Heart left ventricle (tissue), 16 donors: ENCODE measurements at regions of chr12 and their contacts with region 1.

Region 1: DNA sequence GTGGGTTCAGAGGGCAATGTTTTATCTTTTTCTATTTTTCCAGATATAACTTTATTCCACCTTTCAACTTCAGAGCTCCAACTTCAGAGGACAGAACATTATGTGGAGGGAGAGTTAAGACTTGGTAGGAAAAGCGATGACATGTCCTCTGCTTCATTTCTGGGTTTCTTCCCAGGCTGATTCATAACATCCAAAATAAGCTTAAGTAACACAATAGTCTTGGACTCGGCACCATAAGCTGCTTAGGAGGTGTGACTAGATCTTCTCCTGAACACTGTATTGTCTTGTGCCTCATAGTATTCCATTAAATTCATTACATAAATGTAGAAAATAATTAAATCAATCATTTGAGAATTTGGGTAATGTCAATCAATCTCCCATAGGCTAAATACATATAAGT is 95.5 kb upstream of the PDE3A start:
- DNase-seq: no peak
- ATAC-seq: peak; percentile 76 to 83 (median 80)
- H3K4me3 ChIP-seq: peak overlapping the region in 1 of 12 donors; percentile 30
- H3K27ac ChIP-seq: peak overlapping the region; percentile 28 to 91 (median 71)
- H3K4me1 ChIP-seq: peaks cover 0 to 53% (median 16%) of the 10 kb centered on the region in 12 donors
- H3K27me3 ChIP-seq: no peaks in the 10 kb centered on the region
- CTCF ChIP-seq: no peak
- POLR2A ChIP-seq: no peak

Region 2: GRCh38 chr12:20006871-20007730 is 265.7 kb before region 1 on chr12:
- intact Hi-C with region 1: loop called in 1 of 10 experiments (anchors 10 kb)
- DNase-seq: no peak
- ATAC-seq: no peak
- H3K4me3 ChIP-seq: no peak overlapping the region
- H3K27ac ChIP-seq: no peak overlapping the region
- H3K4me1 ChIP-seq: peaks cover 0 to 7% (median 0%) of the 10 kb centered on the region in 12 donors
- H3K27me3 ChIP-seq: no peaks in the 10 kb centered on the region
- CTCF ChIP-seq: no peak
- POLR2A ChIP-seq: no peak

Region 3: DNA sequence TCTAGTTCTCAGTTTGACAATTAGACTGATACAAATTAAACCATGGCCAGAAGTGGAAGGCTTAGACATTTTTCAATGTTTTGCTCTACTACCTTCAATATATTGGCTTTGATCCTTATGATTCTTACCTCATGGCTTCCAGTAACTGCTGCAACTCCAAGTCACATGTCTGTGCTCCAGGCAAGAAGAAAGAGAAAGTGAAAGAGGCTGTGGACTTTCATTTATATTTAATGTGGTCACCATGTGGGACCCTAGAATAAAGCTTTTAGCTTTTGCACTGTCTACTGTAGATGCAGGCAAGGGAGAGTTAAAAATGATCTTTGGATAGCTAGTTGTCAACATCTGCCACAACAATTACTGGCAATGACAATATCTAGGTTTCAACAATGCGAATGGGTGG is 118.7 kb before region 1 on chr12:
- intact Hi-C with region 1: no loop called
- DNase-seq: no peak
- ATAC-seq: no peak
- H3K4me3 ChIP-seq: peak overlapping the region in 2 of 12 donors; percentile 3 to 30
- H3K27ac ChIP-seq: no peak overlapping the region
- H3K4me1 ChIP-seq: peaks cover 0 to 11% (median 0%) of the 10 kb centered on the region in 12 donors
- H3K27me3 ChIP-seq: no peaks in the 10 kb centered on the region
- CTCF ChIP-seq: no peak
- POLR2A ChIP-seq: no peak

Region 4: DNA sequence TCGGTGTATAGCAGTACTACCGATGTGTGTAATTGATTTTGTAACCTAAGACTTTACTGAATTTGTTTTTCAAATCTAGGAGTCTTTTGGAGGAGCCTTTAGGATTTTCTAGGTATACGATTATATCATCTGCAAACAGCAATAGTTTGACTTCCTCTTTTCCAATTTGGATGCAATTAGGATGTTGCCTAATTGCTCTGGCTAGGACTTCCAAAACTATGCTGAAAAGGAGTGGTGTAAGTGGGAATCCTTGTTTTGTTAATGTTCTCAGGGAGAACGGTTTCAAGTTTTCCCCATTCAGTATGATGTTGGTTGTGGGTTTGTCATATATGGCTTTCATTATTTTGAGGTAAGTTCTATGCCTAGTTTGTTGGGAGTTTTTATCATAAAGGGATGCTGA is 76.0 kb before region 1 on chr12:
- intact Hi-C with region 1: no loop called
- DNase-seq: no peak
- ATAC-seq: no peak
- H3K4me3 ChIP-seq: no peak overlapping the region
- H3K27ac ChIP-seq: no peak overlapping the region
- H3K4me1 ChIP-seq: peaks cover 0 to 4% (median 0%) of the 10 kb centered on the region in 12 donors
- H3K27me3 ChIP-seq: no peaks in the 10 kb centered on the region
- CTCF ChIP-seq: no peak
- POLR2A ChIP-seq: no peak

Region 5: GRCh38 chr12:20320552-20320951 is 47.8 kb after region 1 on chr12:
- intact Hi-C with region 1: loop called in 3 of 10 experiments (anchors 5 to 10 kb)
- DNase-seq: no peak
- ATAC-seq: peak; percentile 86 to 95 (median 93)
- H3K4me3 ChIP-seq: peak overlapping the region in 9 of 12 donors; percentile 26 to 51 (median 38)
- H3K27ac ChIP-seq: peak overlapping the region; percentile 9 to 92 (median 71)
- H3K4me1 ChIP-seq: peaks cover 0 to 6% (median 0%) of the 10 kb centered on the region in 12 donors
- H3K27me3 ChIP-seq: no peaks in the 10 kb centered on the region
- CTCF ChIP-seq: no peak
- POLR2A ChIP-seq: no peak

Region 6: DNA sequence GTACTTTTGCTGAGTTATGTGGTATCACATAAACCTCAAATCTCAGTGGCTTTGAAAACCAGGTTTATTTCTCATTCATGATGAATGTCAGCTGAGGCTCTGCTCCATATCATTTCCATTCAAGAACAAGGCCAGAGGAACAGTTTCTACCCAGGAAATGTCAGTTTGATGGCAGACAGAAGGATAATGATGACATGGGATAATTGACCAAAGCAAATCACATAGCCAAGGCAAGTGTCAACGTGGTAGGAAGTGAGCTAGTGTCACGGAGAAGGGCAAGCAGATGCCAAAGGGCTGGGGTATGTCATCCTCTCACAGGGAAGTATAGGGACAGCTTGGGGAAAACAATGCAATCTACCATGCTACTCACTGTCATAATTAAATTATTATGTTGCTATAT is 83.2 kb after region 1 on chr12:
- intact Hi-C with region 1: loop called in 4 of 10 experiments (anchors 5 to 10 kb)
- DNase-seq: no peak
- ATAC-seq: peak in 2 of 4 donors; percentile 46 to 58
- H3K4me3 ChIP-seq: no peak overlapping the region
- H3K27ac ChIP-seq: peak overlapping the region in 3 of 12 donors; percentile 14 to 25 (median 23)
- H3K4me1 ChIP-seq: peaks cover 0 to 28% (median 8%) of the 10 kb centered on the region in 12 donors
- H3K27me3 ChIP-seq: no peaks in the 10 kb centered on the region
- CTCF ChIP-seq: no peak
- POLR2A ChIP-seq: no peak